B cell (primary cell): ENCODE measurements at regions of chr9 and their contacts with region 1.

Region 1: GRCh38 chr9:35071814-35072460 is 488 bp downstream of the VCP start:
- DNase-seq: peak; percentile 89
- ATAC-seq: peak; percentile 64
- H3K4me3 ChIP-seq: peak overlapping the region; percentile 73 to 96 (median 86)
- H3K4me3 Mint-ChIP-seq: peak overlapping the region; percentile 89
- H3K27ac ChIP-seq: peak overlapping the region; percentile 84 to 97
- H3K27ac Mint-ChIP-seq: peak overlapping the region; percentile 90
- H3K4me1 ChIP-seq: peaks cover 40 to 45% of the 10 kb centered on the region in 2 donors
- H3K4me1 Mint-ChIP-seq: peaks cover 49% of the 10 kb centered on the region
- H3K27me3 ChIP-seq: no peaks in the 10 kb centered on the region
- H3K27me3 Mint-ChIP-seq: no peaks in the 10 kb centered on the region
- CTCF ChIP-seq: peak; percentile 52

Region 2: DNA sequence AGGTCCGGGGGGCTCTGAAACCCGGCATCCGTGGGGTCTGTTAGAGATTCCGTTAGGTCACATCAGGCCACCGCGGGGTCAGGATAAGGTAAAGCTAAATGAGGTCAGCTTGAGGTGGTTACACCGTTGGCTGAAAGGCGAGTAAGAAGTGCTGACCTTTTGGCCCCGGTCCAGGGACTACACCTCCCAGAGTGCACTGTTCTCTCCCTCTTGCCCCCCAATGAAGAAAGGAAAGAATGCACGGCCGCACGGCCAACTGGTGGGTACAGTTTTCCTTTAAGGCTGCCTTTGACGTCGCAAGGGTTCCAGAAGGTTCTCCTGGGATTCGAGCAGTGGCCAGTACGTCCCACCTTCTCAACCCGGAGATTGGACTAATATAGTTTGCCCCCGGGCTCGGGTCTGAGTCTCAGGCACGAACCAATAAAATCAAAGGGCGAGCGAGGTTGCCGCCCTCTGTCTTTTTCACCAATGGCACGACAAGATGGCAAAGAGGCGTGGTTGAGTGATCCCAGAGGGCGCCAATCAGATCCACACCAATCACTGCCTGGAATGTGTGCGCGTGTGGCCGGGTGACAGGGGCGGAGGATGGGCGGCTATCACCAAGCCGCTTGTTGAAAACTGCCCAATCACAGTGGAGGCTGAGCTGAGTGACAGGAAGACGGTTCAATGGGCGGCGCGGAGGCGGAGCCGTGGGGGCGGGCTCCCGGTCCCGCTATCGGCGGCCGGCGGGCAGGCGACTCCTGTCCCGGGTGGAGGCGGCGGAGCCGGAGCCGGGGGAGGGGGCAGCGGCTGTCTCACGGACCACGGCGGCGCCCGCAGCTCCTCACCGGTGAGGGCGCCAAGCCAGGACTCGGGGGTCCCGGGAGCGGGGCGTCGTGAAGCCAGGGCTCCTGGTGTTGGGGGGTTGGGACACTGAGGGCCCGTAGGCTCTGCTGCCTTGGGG is 82.7 kb before region 1 on chr9 and contains the start of gene DNAJB5:
- CTCF ChIA-PET with region 1: interaction called, 3 read pairs
- POLR2A ChIA-PET with region 1: interaction called, 6 read pairs
- intact Hi-C with region 1: loop called (anchors 1 kb)
- DNase-seq: peak; percentile 98
- ATAC-seq: peak; percentile 96
- H3K4me3 ChIP-seq: peak within 1 kb of the TSS; percentile 74 to 95 (median 84)
- H3K4me3 Mint-ChIP-seq: peak within 1 kb of the TSS; percentile 94
- H3K27ac ChIP-seq: peak within 1 kb of the TSS; percentile 11 to 68
- H3K27ac Mint-ChIP-seq: peak within 1 kb of the TSS; percentile 78
- H3K4me1 ChIP-seq: peaks cover 42 to 51% of the 10 kb centered on the region in 2 donors
- H3K4me1 Mint-ChIP-seq: peaks cover 45% of the 10 kb centered on the region
- H3K27me3 ChIP-seq: no peaks in the 10 kb centered on the region
- H3K27me3 Mint-ChIP-seq: no peaks in the 10 kb centered on the region
- CTCF ChIP-seq: no peak
- total RNA-seq, gene DNAJB5: 1.0 and 2.4 TPM in 2 replicates

Region 3: DNA sequence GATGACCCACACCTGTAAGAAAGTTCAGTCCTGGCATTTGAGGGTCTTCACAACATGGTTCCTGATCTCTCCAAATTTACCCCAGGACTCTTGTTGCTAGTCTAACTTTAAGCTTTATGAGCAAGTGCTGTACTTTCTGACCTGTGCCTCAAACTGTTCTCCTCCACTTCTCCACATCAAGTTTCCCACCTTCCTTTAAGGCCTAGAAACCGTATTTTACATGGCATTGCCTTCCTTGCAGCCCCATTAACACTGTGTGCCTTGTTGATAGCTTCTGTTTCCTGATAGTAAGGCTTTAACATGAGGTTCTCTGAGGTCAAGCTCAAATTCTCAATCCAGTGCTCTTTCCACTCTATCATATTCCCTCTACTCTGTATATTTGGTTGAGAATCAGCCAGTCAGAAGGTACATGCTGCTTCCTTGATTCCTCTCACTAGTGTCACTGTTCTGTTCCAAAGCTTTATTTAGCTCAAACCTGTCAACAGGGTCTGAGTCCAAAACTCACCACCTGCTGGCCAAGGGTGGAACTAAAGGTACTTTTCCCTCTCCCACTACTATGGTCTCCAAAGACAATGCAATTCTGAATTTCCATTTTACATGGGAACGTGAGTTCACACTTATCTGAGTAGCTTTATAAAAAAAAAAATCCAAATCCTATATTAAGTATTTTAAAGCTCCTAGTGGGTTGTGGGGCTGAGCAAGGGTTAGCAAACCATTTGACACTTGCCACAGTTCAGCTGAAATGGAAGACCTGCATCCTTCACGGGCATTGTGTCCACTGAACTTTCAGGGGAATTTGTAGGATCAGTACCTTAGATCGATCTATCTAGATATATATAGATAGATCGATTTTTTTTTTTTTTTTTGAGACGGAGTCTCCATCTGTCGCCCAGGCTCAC is 20.6 kb before region 1 on chr9:
- CTCF ChIA-PET with region 1: interaction called, 20 read pairs
- POLR2A ChIA-PET with region 1: no interaction called
- intact Hi-C with region 1: loop called (anchors 2 kb)
- DNase-seq: peak; percentile 63
- ATAC-seq: peak; percentile 51
- H3K4me3 ChIP-seq: no peak overlapping the region
- H3K4me3 Mint-ChIP-seq: no peak overlapping the region
- H3K27ac ChIP-seq: no peak overlapping the region
- H3K27ac Mint-ChIP-seq: peak overlapping the region; percentile 0
- H3K4me1 ChIP-seq: no peaks in the 10 kb centered on the region
- H3K4me1 Mint-ChIP-seq: peaks cover 4% of the 10 kb centered on the region
- H3K27me3 ChIP-seq: no peaks in the 10 kb centered on the region
- H3K27me3 Mint-ChIP-seq: no peaks in the 10 kb centered on the region
- CTCF ChIP-seq: peak; percentile 80

Region 4: GRCh38 chr9:35096035-35096849 is 24.3 kb after region 1 on chr9 and contains the start of gene PIGO:
- CTCF ChIA-PET with region 1: interaction called, 18 read pairs
- POLR2A ChIA-PET with region 1: interaction called, 4 read pairs
- intact Hi-C with region 1: loop called (anchors 1 kb)
- DNase-seq: peak; percentile 94
- ATAC-seq: peak; percentile 92
- H3K4me3 ChIP-seq: peak within 1 kb of the TSS; percentile 61 to 100 (median 93)
- H3K4me3 Mint-ChIP-seq: peak within 1 kb of the TSS; percentile 90
- H3K27ac ChIP-seq: peak within 1 kb of the TSS; percentile 99
- H3K27ac Mint-ChIP-seq: peak within 1 kb of the TSS; percentile 94
- H3K4me1 ChIP-seq: peaks cover 7 to 16% of the 10 kb centered on the region in 2 donors
- H3K4me1 Mint-ChIP-seq: peaks cover 34% of the 10 kb centered on the region
- H3K27me3 ChIP-seq: no peaks in the 10 kb centered on the region
- H3K27me3 Mint-ChIP-seq: no peaks in the 10 kb centered on the region
- CTCF ChIP-seq: peak; percentile 85
- total RNA-seq, gene PIGO: 32.5 and 34.7 TPM in 2 replicates

Region 5: GRCh38 chr9:35102926-35103659 is 31.2 kb after region 1 on chr9 and contains the start of gene STOML2:
- CTCF ChIA-PET with region 1: interaction called, 18 read pairs
- POLR2A ChIA-PET with region 1: interaction called, 14 read pairs
- intact Hi-C with region 1: no loop called
- DNase-seq: peak; percentile 95
- ATAC-seq: peak; percentile 95
- H3K4me3 ChIP-seq: peak within 1 kb of the TSS; percentile 61 to 94 (median 88)
- H3K4me3 Mint-ChIP-seq: peak within 1 kb of the TSS; percentile 86
- H3K27ac ChIP-seq: peak within 1 kb of the TSS; percentile 86 to 96
- H3K27ac Mint-ChIP-seq: peak within 1 kb of the TSS; percentile 97
- H3K4me1 ChIP-seq: peaks cover 13 to 22% of the 10 kb centered on the region in 2 donors
- H3K4me1 Mint-ChIP-seq: peaks cover 28% of the 10 kb centered on the region
- H3K27me3 ChIP-seq: no peaks in the 10 kb centered on the region
- H3K27me3 Mint-ChIP-seq: no peaks in the 10 kb centered on the region
- CTCF ChIP-seq: no peak
- total RNA-seq, gene STOML2: 52.1 and 58.9 TPM in 2 replicates

Region 6: GRCh38 chr9:35111001-35111933 is 39.3 kb after region 1 on chr9:
- CTCF ChIA-PET with region 1: interaction called, 7 read pairs
- POLR2A ChIA-PET with region 1: interaction called, 13 read pairs
- intact Hi-C with region 1: loop called (anchors 1 kb)
- DNase-seq: peak; percentile 96
- ATAC-seq: peak; percentile 77
- H3K4me3 ChIP-seq: peak overlapping the region; percentile 32 to 74 (median 59)
- H3K4me3 Mint-ChIP-seq: peak overlapping the region; percentile 88
- H3K27ac ChIP-seq: peak overlapping the region; percentile 80 to 83
- H3K27ac Mint-ChIP-seq: peak overlapping the region; percentile 93
- H3K4me1 ChIP-seq: peaks cover 33 to 45% of the 10 kb centered on the region in 2 donors
- H3K4me1 Mint-ChIP-seq: peaks cover 58% of the 10 kb centered on the region
- H3K27me3 ChIP-seq: no peaks in the 10 kb centered on the region
- H3K27me3 Mint-ChIP-seq: no peaks in the 10 kb centered on the region
- CTCF ChIP-seq: no peak

Region 7: GRCh38 chr9:35603987-35604577 is 532.1 kb after region 1 on chr9:
- CTCF ChIA-PET with region 1: no interaction called
- POLR2A ChIA-PET with region 1: no interaction called
- intact Hi-C with region 1: loop called (anchors 1 kb)
- DNase-seq: peak; percentile 100
- ATAC-seq: peak; percentile 86
- H3K4me3 ChIP-seq: peak overlapping the region; percentile 71 to 84 (median 81)
- H3K4me3 Mint-ChIP-seq: peak overlapping the region; percentile 97
- H3K27ac ChIP-seq: peak overlapping the region; percentile 80 to 84
- H3K27ac Mint-ChIP-seq: peak overlapping the region; percentile 99
- H3K4me1 ChIP-seq: peaks cover 26 to 46% of the 10 kb centered on the region in 2 donors
- H3K4me1 Mint-ChIP-seq: peaks cover 36% of the 10 kb centered on the region
- H3K27me3 ChIP-seq: no peaks in the 10 kb centered on the region
- H3K27me3 Mint-ChIP-seq: no peaks in the 10 kb centered on the region
- CTCF ChIP-seq: peak; percentile 97